ENCODE measurements at regions of chr2 and their contacts with region 1.

Region 1: GRCh38 chr2:96407041-96407918 is 71.7 kb downstream of the NCAPH start:
- DNase-seq: peak; percentile 63 to 93 (median 83)

Region 2: DNA sequence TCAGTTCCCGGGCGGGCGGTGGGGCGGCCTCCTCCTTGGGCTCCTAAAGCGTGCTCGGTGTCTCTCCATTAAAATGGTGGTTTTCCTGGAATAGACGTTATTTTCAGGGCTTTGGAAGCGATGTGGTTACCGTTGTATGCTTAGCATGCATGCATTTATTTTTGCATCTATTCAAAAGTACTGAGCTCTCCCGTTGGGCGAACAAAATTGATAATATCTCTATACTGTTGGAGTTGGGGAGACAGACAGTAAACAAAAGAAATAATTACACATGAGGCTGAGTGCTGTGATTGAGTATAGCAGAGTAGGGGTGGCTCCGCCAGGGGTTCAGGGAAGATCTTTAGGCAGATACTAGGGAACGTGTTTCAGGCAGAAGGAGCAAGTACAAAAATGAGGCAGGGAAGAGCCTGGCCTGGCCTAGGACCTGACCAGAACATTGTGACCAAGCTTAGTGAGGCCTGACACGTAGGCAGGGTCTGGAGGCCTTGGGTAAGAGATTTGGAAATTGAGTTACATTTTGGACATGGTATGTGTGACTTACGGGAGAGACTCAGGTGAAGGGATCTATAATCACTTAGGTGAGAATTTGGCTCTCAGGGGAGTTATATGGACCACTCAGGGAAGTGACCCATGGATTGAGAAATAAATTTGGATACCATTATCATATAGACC is 71.0 kb before region 1 on chr2:
- intact Hi-C with region 1: loop called (anchors 2 kb)
- DNase-seq: no peak

Region 3: DNA sequence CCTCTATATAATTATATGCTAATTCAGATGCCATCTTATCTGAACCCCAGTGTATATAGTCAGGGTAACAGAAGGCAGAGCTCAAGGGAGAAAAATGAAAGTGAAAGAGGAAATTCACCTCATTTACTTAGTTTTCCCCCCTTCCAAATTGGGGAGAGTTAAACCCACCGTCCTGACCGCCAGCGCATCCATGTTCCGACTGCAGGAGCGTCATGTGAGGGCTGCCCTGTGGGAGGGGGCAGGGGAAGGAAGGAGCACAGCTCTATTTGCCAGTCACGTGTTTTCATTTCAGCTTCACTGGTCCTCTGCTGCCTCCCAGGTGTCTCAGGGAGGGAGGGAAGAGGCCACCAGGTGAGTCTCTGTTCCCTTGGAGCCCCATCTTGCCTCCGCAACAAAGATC is 366.6 kb after region 1 on chr2:
- intact Hi-C with region 1: no loop called
- DNase-seq: no peak

Measured in head of caudate nucleus (tissue), 42 donors.